Left cardiac atrium (tissue), 4 donors: ENCODE measurements at regions of chr22 and their contacts with region 1.

Region 1: GRCh38 chr22:40346178-40347118 is at the start of gene ADSL:
- DNase-seq: peak; percentile 93
- ATAC-seq: peak; percentile 99
- total RNA-seq, gene ADSL: 37.4 to 47.0 TPM

Region 2: GRCh38 chr22:40044102-40044869 is 302.2 kb before region 1 on chr22:
- intact Hi-C with region 1: loop called in 1 of 2 experiments (anchors 2 kb)
- DNase-seq: peak; percentile 97
- ATAC-seq: peak; percentile 96 to 98